ENCODE measurements at regions of chr4 and their contacts with region 1.

Region 1: DNA sequence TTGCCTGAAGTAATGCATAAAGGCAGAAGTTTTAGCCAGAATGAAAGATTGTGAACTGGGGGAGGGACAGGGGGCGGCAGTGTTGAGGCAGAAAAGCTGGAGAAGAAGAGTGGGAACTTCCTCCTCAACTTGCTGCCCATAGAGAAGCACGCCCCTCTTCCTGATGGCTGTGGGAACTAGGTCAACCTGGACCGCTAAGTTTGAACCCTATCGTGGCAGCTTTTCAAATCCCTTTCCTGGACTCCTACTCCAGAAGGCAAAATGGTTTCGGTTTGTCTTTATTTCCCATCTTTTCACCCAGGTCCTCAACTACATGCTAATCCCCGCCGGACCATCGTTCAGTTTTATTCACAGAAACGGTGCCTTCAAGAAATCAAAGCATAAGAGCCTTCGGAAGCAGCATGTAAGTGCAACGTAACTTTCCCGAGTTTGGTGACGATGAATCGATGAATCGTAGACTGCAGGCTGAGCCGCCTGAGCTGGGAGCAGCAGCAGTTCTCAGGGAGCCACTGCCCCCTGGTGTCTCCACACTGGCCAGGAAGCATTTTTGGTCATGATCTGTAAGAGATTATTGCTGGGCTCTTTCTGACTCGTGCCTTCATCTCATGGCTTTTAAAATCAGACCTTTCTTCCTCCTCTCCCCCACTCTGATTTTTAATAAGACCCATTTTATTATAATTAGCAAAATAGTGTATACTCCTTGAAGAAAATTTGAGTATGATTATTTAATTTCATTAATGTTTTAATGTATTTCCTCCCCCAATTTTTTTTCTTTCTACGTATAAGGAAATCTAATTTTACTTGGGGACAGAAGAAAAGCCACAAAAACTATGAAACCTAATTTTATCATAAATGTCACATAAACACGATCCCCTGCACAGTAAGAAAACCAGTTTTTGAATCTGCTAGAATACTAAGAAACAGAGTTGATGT is 21.4 kb downstream of the SPINK2 start:
- DNase-seq: peak; percentile 79
- H3K4me3 Mint-ChIP-seq: peak overlapping the region; percentile 91
- H3K27ac Mint-ChIP-seq: peak overlapping the region; percentile 85
- H3K4me1 Mint-ChIP-seq: no peaks in the 10 kb centered on the region
- H3K27me3 Mint-ChIP-seq: no peaks in the 10 kb centered on the region
- CTCF ChIP-seq: peak; percentile 73

Region 2: GRCh38 chr4:56530269-56531148 is 269.6 kb before region 1 on chr4:
- CTCF ChIA-PET with region 1: no interaction called
- intact Hi-C with region 1: no loop called
- DNase-seq: peak; percentile 57
- H3K4me3 Mint-ChIP-seq: no peak overlapping the region
- H3K27ac Mint-ChIP-seq: no peak overlapping the region
- H3K4me1 Mint-ChIP-seq: no peaks in the 10 kb centered on the region
- H3K27me3 Mint-ChIP-seq: peaks cover 14% of the 10 kb centered on the region
- CTCF ChIP-seq: no peak

Region 3: DNA sequence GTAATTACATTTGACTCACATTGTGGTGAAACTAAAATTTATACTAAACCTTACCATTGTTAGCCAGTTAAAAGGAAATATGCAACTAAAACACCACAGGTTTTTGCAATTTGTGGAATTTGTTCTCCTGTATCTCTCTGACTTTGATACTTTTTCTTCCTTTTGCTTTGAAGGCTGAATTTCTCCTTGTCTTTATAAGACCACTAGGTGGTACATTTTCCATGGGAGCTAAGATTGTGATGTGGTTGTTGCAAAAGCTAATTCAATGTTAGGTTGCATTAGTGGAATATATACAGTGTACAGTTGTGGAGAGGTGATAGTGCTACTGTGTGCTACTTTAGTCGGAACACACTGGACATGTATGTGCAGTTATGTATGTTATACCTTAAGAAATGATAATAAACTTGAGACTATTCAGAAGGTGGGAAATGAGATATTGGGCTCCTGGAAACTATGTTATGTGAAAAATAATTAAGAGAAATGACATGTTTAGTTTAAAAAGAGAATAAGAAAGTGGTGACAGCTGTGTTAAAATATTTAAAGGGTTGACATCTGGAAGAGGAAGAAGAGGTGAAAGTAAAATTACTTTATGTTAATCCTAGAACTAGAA is 224.2 kb before region 1 on chr4:
- CTCF ChIA-PET with region 1: interaction called, 9 read pairs
- intact Hi-C with region 1: loop called (anchors 1 kb)
- DNase-seq: no peak
- H3K4me3 Mint-ChIP-seq: no peak overlapping the region
- H3K27ac Mint-ChIP-seq: no peak overlapping the region
- H3K4me1 Mint-ChIP-seq: no peaks in the 10 kb centered on the region
- H3K27me3 Mint-ChIP-seq: no peaks in the 10 kb centered on the region
- CTCF ChIP-seq: no peak

Region 4: DNA sequence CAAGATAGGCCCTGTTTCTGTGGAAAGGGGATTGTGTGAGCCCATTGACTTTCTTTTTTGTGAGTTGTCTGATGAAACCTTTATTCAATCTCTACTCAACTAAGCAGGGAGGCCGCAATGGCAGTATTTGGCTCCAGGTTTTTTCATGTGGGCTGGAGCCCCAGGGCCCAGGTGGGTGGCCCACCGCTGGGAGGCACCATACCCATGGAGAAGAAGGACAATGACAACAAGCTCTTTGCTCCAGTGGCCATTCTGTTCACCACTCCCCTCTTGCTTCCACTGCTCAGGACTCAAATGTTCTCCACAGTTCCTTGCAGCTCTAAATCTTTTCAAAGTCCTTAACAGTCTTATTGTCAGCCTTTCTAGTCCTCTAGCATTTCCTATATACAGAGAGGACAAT is 173.1 kb before region 1 on chr4:
- CTCF ChIA-PET with region 1: interaction called, 10 read pairs
- intact Hi-C with region 1: loop called (anchors 1 kb)
- DNase-seq: peak; percentile 33
- H3K4me3 Mint-ChIP-seq: no peak overlapping the region
- H3K27ac Mint-ChIP-seq: no peak overlapping the region
- H3K4me1 Mint-ChIP-seq: no peaks in the 10 kb centered on the region
- H3K27me3 Mint-ChIP-seq: no peaks in the 10 kb centered on the region
- CTCF ChIP-seq: peak; percentile 15

Region 5: DNA sequence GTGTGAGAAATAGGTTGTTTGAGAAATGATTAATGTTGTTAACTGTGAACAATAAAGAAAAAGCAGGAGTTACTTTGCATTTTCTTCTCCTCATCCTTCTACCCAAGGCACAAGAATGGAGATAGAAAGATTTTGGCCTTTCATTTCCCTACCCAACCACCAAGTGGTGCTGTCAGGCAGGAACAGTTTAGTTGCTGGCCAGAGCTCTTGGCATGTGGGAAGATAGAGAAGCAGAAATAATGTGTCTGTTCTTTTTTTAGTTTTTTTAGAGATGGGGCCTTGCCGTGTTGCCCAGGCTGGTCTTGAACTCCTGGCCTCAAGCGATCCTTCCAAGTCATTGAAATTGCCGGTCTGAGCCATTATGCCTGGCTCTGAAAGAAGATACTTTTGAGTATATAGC is 131.8 kb before region 1 on chr4:
- CTCF ChIA-PET with region 1: interaction called, 9 read pairs
- intact Hi-C with region 1: loop called (anchors 1 kb)
- DNase-seq: no peak
- H3K4me3 Mint-ChIP-seq: no peak overlapping the region
- H3K27ac Mint-ChIP-seq: no peak overlapping the region
- H3K4me1 Mint-ChIP-seq: no peaks in the 10 kb centered on the region
- H3K27me3 Mint-ChIP-seq: no peaks in the 10 kb centered on the region
- CTCF ChIP-seq: no peak

Region 6: GRCh38 chr4:56821381-56822243 is 21.5 kb after region 1 on chr4 and contains the start of gene SPINK2:
- CTCF ChIA-PET with region 1: no interaction called
- intact Hi-C with region 1: no loop called
- DNase-seq: peak; percentile 66
- H3K4me3 Mint-ChIP-seq: peak within 1 kb of the TSS; percentile 71
- H3K27ac Mint-ChIP-seq: no peak within 1 kb of the TSS
- H3K4me1 Mint-ChIP-seq: no peaks in the 10 kb centered on the region
- H3K27me3 Mint-ChIP-seq: peaks cover 11% of the 10 kb centered on the region
- CTCF ChIP-seq: no peak
- total RNA-seq, gene SPINK2: not detected in 2 replicates

Region 7: DNA sequence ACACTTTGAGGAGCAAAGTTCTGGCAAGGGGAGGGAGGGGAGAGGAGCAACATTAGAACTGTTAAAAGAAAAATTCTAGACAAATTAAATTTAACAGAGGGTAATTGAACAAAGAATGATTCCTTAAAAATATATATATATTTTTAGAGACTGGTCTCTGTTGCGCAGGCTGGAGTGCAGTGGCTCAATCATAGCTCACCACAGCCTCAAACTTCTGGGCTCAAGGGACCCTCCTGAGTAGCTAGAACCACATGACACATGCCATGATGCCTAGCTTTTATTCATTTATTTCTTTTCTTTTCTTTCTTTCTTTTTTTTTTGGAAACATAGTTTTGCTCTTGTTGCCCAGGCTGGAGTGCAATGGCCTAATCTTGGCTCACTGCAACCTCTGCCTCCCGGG is 40.5 kb after region 1 on chr4:
- CTCF ChIA-PET with region 1: interaction called, 3 read pairs
- intact Hi-C with region 1: loop called (anchors 1 kb)
- DNase-seq: no peak
- H3K4me3 Mint-ChIP-seq: no peak overlapping the region
- H3K27ac Mint-ChIP-seq: no peak overlapping the region
- H3K4me1 Mint-ChIP-seq: no peaks in the 10 kb centered on the region
- H3K27me3 Mint-ChIP-seq: no peaks in the 10 kb centered on the region
- CTCF ChIP-seq: no peak

Region 8: DNA sequence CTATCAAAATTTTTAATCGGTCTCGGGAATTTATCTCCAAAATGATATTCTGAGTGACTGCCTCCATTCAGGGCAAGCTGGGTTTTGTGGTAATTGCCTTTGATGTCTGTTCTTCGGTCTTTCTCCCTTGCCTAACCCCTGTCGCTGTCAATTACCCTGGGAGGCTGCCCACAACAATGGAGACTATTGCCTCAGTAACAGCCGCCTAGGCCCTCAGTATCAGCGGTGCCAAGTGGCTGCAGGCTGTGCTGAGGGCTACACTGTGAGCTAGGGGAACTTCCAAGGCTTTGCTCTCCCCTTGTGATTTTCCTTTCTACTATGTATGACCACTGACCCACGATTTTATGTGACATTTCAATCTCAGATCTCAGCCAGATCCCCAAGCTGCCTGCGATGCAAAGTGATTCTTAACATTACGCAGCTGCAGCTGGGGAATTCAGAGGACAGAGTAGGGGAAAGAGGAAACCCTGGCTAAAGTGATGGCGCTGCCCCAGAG is 71.3 kb after region 1 on chr4:
- CTCF ChIA-PET with region 1: no interaction called
- intact Hi-C with region 1: no loop called
- DNase-seq: no peak
- H3K4me3 Mint-ChIP-seq: no peak overlapping the region
- H3K27ac Mint-ChIP-seq: no peak overlapping the region
- H3K4me1 Mint-ChIP-seq: no peaks in the 10 kb centered on the region
- H3K27me3 Mint-ChIP-seq: no peaks in the 10 kb centered on the region
- CTCF ChIP-seq: no peak